Activated B cell treated with CpG ODN at 0.5 μM for 24 hours (primary cell): ENCODE measurements at regions of chr1 and their contacts with region 1.

Region 1: DNA sequence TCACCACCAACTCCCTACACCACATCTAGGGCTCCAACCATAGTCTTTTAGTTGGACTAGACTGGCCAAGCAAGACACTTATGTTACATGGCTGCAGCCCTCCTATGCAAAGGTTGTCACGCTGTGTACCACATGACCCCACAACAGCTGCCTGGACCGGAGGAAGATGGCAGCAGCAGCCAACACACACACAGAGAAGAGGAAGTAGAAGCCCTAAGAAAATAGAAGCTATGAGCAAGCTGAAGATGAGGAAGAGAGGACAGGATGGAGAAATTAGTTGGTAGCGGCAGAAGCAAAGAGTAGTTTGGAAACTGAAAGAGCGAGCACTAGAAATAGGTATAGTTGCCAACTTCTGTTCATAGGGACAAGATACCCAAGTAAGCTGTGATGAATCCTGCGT is 60.8 kb upstream of the RALGPS2 start:
- DNase-seq: peak; percentile 28
- ATAC-seq: peak; percentile 83
- H3K4me3 Mint-ChIP-seq: peak overlapping the region; percentile 69
- H3K27ac Mint-ChIP-seq: peak overlapping the region; percentile 86
- H3K4me1 Mint-ChIP-seq: peaks cover 91% of the 10 kb centered on the region
- H3K27me3 Mint-ChIP-seq: no peaks in the 10 kb centered on the region
- CTCF ChIP-seq: no peak

Region 2: DNA sequence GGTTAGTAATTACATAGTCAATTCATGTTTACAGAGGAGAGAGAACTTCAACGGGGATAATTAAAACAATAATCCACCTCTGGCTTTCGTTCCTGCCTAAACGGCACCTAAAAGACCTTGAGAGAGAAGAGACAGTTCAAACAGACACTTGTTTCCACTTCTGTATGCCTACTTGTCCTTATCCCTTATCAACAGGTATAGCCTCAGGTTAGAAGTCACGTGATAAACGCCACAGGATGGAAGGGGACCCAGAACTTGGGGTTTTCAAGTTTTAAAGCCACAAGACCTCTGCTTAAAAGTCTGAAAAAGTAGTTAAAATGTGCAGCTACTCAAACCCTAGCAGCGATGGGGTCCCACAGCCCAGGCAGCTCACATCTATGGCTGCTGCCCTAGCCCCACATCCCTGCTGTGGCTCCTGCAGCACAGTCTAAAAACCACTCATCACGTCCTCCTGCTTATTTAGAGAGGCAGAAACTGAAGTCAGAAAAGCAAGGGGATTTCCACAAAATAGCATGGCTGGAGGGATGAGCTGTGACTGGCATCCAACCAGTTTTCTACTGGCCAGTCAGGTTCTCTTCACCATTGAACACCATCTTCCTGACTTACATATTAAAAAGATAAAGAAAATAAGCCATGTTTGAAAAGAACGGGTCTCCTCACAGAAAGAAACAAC is 643.2 kb before region 1 on chr1:
- CTCF ChIA-PET with region 1: no interaction called
- POLR2A ChIA-PET with region 1: no interaction called
- intact Hi-C with region 1: no loop called
- DNase-seq: no peak
- ATAC-seq: no peak
- H3K4me3 Mint-ChIP-seq: no peak overlapping the region
- H3K27ac Mint-ChIP-seq: no peak overlapping the region
- H3K4me1 Mint-ChIP-seq: no peaks in the 10 kb centered on the region
- H3K27me3 Mint-ChIP-seq: peaks cover 14% of the 10 kb centered on the region
- CTCF ChIP-seq: no peak

Region 3: GRCh38 chr1:178354816-178355215 is 309.5 kb before region 1 on chr1:
- CTCF ChIA-PET with region 1: no interaction called
- POLR2A ChIA-PET with region 1: no interaction called
- intact Hi-C with region 1: no loop called
- DNase-seq: no peak
- ATAC-seq: no peak
- H3K4me3 Mint-ChIP-seq: no peak overlapping the region
- H3K27ac Mint-ChIP-seq: no peak overlapping the region
- H3K4me1 Mint-ChIP-seq: no peaks in the 10 kb centered on the region
- H3K27me3 Mint-ChIP-seq: peaks cover 2% of the 10 kb centered on the region
- CTCF ChIP-seq: no peak

Region 4: GRCh38 chr1:178706432-178706831 is 42.2 kb after region 1 on chr1:
- CTCF ChIA-PET with region 1: no interaction called
- POLR2A ChIA-PET with region 1: no interaction called
- intact Hi-C with region 1: loop called (anchors 5 kb)
- DNase-seq: no peak
- ATAC-seq: no peak
- H3K4me3 Mint-ChIP-seq: no peak overlapping the region
- H3K27ac Mint-ChIP-seq: no peak overlapping the region
- H3K4me1 Mint-ChIP-seq: peaks cover 49% of the 10 kb centered on the region
- H3K27me3 Mint-ChIP-seq: no peaks in the 10 kb centered on the region
- CTCF ChIP-seq: no peak

Region 5: DNA sequence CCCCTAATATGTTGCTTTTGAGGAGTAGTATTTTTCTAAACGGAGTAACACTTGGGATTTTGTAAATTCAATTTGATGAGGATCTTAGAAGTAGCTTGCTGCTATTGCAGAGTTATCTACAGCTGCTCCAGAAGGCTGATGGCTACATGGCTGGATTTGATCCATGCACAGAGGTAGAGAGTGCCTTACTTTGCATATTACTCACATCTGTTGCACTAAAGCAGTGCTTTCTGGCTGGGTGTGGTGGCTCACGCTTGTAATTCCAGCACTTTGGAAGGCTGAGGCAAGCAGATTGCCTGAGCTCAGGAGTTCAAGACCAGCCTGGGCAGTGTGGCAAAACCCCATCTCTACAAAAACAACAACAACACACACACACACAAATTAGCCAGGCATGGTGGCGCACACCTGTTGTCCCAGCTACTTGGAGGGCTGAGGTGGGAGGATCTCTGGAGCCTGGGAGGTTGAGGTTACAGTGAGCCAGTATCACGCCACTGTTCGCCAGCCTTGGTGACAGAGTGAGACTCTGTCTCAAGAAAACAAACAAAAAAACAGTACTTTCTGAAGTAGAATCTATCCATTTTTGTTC is 85.4 kb after region 1 on chr1:
- CTCF ChIA-PET with region 1: no interaction called
- POLR2A ChIA-PET with region 1: interaction called, 9 read pairs
- intact Hi-C with region 1: loop called (anchors 5 kb)
- DNase-seq: no peak
- ATAC-seq: peak; percentile 38
- H3K4me3 Mint-ChIP-seq: no peak overlapping the region
- H3K27ac Mint-ChIP-seq: peak overlapping the region; percentile 83
- H3K4me1 Mint-ChIP-seq: peaks cover 64% of the 10 kb centered on the region
- H3K27me3 Mint-ChIP-seq: no peaks in the 10 kb centered on the region
- CTCF ChIP-seq: no peak

Region 6: DNA sequence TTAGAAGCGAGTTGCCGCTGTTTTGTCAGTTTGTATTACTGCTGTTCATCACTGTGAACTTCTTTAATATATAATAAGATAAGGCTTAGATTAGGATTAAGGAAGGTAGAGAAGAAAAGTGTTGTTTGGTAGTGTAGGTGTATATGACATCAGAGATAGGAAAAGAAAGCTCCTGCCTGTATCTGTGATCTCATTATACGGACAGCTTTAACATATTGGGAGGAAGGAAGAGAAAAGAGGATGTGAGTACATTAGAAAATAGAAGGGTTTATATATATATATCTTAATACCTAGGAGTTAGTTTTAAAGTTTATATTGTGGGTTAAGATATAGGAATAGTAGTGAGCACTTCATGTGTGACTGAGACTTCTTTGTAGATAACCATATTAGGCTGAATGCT is 131.7 kb after region 1 on chr1:
- CTCF ChIA-PET with region 1: no interaction called
- POLR2A ChIA-PET with region 1: no interaction called
- intact Hi-C with region 1: no loop called
- DNase-seq: no peak
- ATAC-seq: peak; percentile 77
- H3K4me3 Mint-ChIP-seq: peak overlapping the region; percentile 59
- H3K27ac Mint-ChIP-seq: peak overlapping the region; percentile 85
- H3K4me1 Mint-ChIP-seq: peaks cover 62% of the 10 kb centered on the region
- H3K27me3 Mint-ChIP-seq: no peaks in the 10 kb centered on the region
- CTCF ChIP-seq: no peak